OCI-LY7 (cell line): ENCODE measurements at regions of chr11 and their contacts with region 1.

Region 1: GRCh38 chr11:128530118-128531074 is 57.0 kb downstream of the ETS1 start:
- DNase-seq: no peak
- H3K4me3 ChIP-seq: no peak overlapping the region
- H3K27ac ChIP-seq: no peak overlapping the region
- H3K4me1 ChIP-seq: peaks cover 34% of the 10 kb centered on the region
- CTCF ChIP-seq: no peak

Region 2: GRCh38 chr11:128246364-128246801 is 284.0 kb before region 1 on chr11:
- CTCF ChIA-PET with region 1: no interaction called
- POLR2A ChIA-PET with region 1: no interaction called
- intact Hi-C with region 1: no loop called
- DNase-seq: no peak
- H3K4me3 ChIP-seq: no peak overlapping the region
- H3K27ac ChIP-seq: no peak overlapping the region
- H3K4me1 ChIP-seq: no peaks in the 10 kb centered on the region
- CTCF ChIP-seq: no peak

Region 3: DNA sequence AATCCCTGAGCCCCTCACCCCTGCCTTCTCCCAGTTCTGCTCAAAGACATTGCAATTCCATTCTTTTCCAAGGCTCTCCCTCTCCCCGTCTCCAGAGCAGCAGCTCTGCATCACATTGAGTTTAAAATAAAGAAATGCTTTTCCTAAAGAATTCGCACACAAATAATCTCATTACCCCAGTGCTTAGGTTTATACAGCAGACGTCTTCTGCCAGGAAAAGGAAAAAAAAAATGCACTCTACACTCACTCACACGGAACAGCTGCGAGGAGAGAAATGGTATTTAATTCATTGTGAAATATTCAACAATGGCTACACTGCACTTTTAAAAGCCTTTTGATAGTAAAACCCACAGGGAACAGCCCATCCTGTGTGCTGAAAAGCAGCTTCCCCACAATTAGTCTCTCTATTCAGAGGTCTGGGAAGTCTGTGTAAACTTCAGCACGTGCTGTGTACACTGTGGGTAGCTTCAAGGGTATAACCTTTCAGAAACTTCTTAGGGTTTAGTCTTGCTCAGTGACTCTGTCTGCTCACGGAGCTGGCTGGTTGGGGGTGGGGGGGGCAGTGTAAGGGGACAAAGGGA is 14.2 kb after region 1 on chr11:
- CTCF ChIA-PET with region 1: interaction called, 5 read pairs
- POLR2A ChIA-PET with region 1: interaction called, 89 read pairs
- intact Hi-C with region 1: no loop called
- DNase-seq: no peak
- H3K4me3 ChIP-seq: no peak overlapping the region
- H3K27ac ChIP-seq: no peak overlapping the region
- H3K4me1 ChIP-seq: peaks cover 60% of the 10 kb centered on the region
- CTCF ChIP-seq: no peak

Region 4: DNA sequence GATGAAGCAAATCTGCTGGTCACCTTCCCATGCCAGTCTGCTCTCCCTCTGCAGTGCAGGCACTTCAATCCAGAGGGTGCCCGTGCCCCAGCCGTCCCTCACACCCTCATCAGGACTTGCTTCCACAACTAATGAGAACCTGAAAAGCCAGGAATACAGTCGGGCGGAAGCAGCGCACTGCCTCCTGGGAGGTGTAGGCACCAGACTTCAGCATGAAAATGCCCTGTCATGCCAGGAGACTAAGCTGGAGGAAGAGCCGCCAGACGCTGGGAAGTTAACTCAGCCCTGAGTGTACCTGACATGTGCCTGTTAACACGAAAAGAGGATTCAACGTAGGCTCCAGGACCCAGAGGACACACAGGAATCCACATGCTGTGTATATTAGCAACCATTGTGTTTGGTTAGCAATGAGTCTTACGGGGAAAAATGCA is 123.4 kb after region 1 on chr11:
- CTCF ChIA-PET with region 1: no interaction called
- POLR2A ChIA-PET with region 1: no interaction called
- intact Hi-C with region 1: no loop called
- DNase-seq: no peak
- H3K4me3 ChIP-seq: no peak overlapping the region
- H3K27ac ChIP-seq: no peak overlapping the region
- H3K4me1 ChIP-seq: peaks cover 7% of the 10 kb centered on the region
- CTCF ChIP-seq: no peak